ENCODE measurements at regions of chr11 and their contacts with region 1.

Region 1: GRCh38 chr11:128831174-128832120 is 35.6 kb downstream of the KCNJ1 start:
- DNase-seq: peak; percentile 61 to 94 (median 82)
- ATAC-seq: peak; percentile 72 to 86 (median 86)
- H3K4me3 ChIP-seq: peak overlapping the region in 1 of 2 donors; percentile 33
- H3K4me3 Mint-ChIP-seq: peak overlapping the region; percentile 57 to 76 (median 67)
- H3K27ac ChIP-seq: peak overlapping the region; percentile 93
- H3K27ac Mint-ChIP-seq: peak overlapping the region; percentile 91 to 92
- H3K4me1 ChIP-seq: peaks cover 6 to 18% of the 10 kb centered on the region in 2 experiments
- H3K4me1 Mint-ChIP-seq: peaks cover 23 to 34% (median 25%) of the 10 kb centered on the region in 3 donors
- H3K27me3 ChIP-seq: no peaks in the 10 kb centered on the region
- H3K27me3 Mint-ChIP-seq: no peaks in the 10 kb centered on the region

Region 2: DNA sequence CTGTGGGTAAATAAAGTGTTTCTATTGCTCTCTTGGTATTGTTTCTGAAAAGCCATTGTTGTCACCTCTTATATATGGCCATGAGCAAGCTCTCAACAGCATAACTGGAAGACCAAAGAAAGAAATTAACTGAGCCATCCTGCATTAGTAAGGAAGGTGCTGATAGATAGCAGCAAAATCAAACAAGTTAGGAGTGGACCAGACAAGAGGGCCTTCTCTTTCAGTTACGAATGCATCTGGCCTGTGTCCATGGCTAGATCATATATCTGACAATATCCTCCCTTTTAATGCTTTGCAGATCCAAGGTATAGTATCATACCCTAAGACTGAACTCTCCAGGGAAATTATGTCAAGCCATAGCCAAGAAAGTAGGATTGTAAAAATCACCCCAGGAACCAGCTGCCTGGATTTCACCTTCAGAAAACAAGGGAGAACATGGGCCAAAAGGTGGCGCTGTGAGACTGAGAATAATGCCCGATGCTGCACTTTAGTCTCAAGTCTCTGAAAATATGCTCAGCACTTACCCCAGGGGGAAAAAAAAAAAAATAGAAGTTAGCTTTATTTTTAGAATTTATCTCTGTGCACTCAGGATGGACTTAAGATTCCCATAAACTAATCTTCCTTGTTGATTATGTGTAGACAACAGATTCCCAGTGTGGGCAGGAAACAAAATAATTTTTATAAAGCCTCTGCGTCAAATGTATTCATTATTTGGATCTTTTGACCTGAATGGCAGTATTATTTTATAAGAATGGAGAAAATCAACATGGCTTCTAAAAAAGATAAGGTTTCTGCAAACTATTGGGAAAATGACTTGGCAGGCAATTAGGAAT is 659.2 kb before region 1 on chr11:
- CTCF ChIA-PET with region 1: interaction called, 29 to 53 read pairs
- POLR2A ChIA-PET with region 1: interaction called in 1 of 2 experiments, 4 read pairs
- DNase-seq: peak; percentile 60 to 93 (median 81)
- ATAC-seq: peak; percentile 50 to 78 (median 72)
- H3K4me3 ChIP-seq: no peak overlapping the region
- H3K4me3 Mint-ChIP-seq: no peak overlapping the region
- H3K27ac ChIP-seq: no peak overlapping the region
- H3K27ac Mint-ChIP-seq: no peak overlapping the region
- H3K4me1 ChIP-seq: no peaks in the 10 kb centered on the region
- H3K4me1 Mint-ChIP-seq: peaks cover 0 to 5% (median 3%) of the 10 kb centered on the region in 3 donors
- H3K27me3 ChIP-seq: no peaks in the 10 kb centered on the region
- H3K27me3 Mint-ChIP-seq: no peaks in the 10 kb centered on the region

Region 3: DNA sequence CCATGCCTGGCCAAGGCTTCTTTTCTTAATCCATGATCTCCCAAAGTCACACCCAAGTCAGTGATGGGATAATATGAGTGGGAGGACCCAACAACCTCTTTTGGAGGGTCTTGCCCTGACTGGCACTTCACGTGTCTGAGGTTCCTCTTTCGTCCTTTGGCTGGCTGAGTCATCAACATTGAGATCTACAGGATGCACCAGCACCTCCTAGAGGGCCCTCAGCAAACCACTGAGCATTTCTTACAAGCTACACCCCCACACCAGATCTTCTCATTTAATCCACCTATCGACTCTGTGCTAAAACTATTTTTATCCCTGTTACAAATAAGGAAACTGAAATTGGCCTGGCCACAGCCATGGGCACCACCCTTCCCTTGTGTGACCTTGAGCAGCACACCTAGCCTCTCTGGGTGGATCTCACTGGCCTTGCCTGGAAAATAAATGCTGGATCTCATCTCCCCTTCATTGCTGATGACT is 74.2 kb before region 1 on chr11:
- CTCF ChIA-PET with region 1: interaction called in 1 of 2 experiments, 10 read pairs
- POLR2A ChIA-PET with region 1: no interaction called
- DNase-seq: peak; percentile 15 to 86 (median 66)
- ATAC-seq: peak; percentile 90 to 98 (median 91)
- H3K4me3 ChIP-seq: no peak overlapping the region
- H3K4me3 Mint-ChIP-seq: peak overlapping the region in 1 of 3 donors; percentile 62
- H3K27ac ChIP-seq: peak overlapping the region; percentile 33
- H3K27ac Mint-ChIP-seq: peak overlapping the region; percentile 82 to 90
- H3K4me1 ChIP-seq: peaks cover 29 to 63% of the 10 kb centered on the region in 2 experiments
- H3K4me1 Mint-ChIP-seq: peaks cover 85 to 87% (median 85%) of the 10 kb centered on the region in 3 donors
- H3K27me3 ChIP-seq: no peaks in the 10 kb centered on the region
- H3K27me3 Mint-ChIP-seq: no peaks in the 10 kb centered on the region

Region 4: GRCh38 chr11:128841461-128842072 is 10.1 kb after region 1 on chr11:
- CTCF ChIA-PET with region 1: interaction called, 6 to 18 read pairs
- POLR2A ChIA-PET with region 1: interaction called in 1 of 2 experiments, 3 read pairs
- DNase-seq: peak in 1 of 35 experiments; percentile 33
- ATAC-seq: peak in 1 of 4 experiments; percentile 20
- H3K4me3 ChIP-seq: no peak overlapping the region
- H3K4me3 Mint-ChIP-seq: no peak overlapping the region
- H3K27ac ChIP-seq: peak overlapping the region; percentile 26
- H3K27ac Mint-ChIP-seq: peak overlapping the region; percentile 49 to 87
- H3K4me1 ChIP-seq: peaks cover 33 to 46% of the 10 kb centered on the region in 2 experiments
- H3K4me1 Mint-ChIP-seq: peaks cover 84 to 99% (median 85%) of the 10 kb centered on the region in 3 donors
- H3K27me3 ChIP-seq: no peaks in the 10 kb centered on the region
- H3K27me3 Mint-ChIP-seq: no peaks in the 10 kb centered on the region

Region 5: DNA sequence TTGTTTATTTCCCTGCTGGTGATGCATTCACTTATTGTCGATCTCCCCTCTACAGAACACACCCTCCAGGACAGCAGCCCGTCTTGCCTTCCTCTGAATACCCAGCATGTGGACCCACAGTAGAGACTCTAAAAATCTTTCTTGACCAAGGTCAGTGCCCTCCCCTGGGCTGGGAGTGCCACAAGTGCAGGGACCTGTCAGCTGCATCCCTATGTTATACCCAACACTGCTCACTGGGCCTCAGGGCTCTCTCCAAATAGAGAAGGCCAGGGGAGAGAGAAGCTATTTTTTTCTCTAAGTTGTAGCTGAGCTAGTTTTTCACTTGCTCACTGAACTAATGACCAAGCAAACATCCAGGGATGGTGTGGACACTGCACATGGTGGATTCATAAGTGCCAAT is 25.9 kb after region 1 on chr11:
- CTCF ChIA-PET with region 1: interaction called, 6 to 12 read pairs
- POLR2A ChIA-PET with region 1: no interaction called
- DNase-seq: no peak
- ATAC-seq: no peak
- H3K4me3 ChIP-seq: no peak overlapping the region
- H3K4me3 Mint-ChIP-seq: no peak overlapping the region
- H3K27ac ChIP-seq: no peak overlapping the region
- H3K27ac Mint-ChIP-seq: no peak overlapping the region
- H3K4me1 ChIP-seq: peaks cover 0 to 9% of the 10 kb centered on the region in 2 experiments
- H3K4me1 Mint-ChIP-seq: peaks cover 5 to 11% (median 9%) of the 10 kb centered on the region in 3 donors
- H3K27me3 ChIP-seq: peaks cover 0 to 23% of the 10 kb centered on the region in 2 experiments
- H3K27me3 Mint-ChIP-seq: peaks cover 3 to 5% of the 10 kb centered on the region in 2 donors

Measured in T-cell (primary cell).